Endothelial cell of umbilical vein (primary cell): ENCODE measurements at regions of chr6 and their contacts with region 1.

Region 1: DNA sequence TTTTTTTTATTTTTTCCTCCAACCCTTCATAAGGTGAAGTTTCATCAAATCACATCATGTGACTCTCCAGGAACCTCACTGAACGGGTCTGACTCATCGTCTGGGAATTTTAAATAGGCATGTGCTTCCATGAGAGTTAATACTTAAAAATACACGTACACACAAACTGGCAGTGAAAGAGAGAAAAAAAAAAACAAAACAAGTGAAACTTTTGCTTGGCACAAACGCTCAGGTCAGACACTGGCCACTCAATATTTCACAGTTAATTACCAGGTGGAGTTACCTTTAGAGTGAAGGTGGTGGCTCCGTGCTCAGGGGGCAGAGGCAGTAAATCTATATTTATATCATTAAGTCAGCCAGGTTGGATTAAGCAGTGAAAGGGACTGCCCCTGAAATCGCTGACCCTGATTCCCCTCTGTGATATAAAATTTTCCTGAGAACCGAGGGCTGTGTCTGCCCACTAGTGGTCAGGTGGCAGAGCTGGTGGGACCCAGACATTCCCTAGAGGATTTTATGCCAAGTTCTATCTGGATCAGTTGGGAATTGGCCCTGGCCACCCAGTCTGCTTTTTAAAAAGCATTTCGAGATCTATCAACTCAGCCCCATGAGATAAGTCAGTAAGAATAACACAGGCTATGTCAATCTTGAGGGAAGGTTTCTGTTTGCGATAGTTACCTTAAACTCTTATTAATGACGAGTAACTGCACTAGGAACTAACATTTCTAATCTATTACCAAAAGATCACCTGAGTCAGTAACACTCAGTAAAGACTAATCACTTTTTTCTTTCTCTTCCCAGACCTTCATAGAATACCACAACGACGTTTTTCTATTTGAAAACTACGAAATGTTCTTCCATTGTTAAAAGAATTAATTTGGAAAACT is 259.1 kb downstream of the HDGFL1 start:
- DNase-seq: peak; percentile 99
- H3K4me3 ChIP-seq: peak overlapping the region in 1 of 3 experiments; percentile 36
- H3K27ac ChIP-seq: peak overlapping the region; percentile 96
- H3K4me1 ChIP-seq: peaks cover 31% of the 10 kb centered on the region
- H3K27me3 ChIP-seq: no peaks in the 10 kb centered on the region
- CTCF ChIP-seq: peak; percentile 85 to 95
- POLR2A ChIP-seq: no peak

Region 2: GRCh38 chr6:21587179-21587924 is 1241.1 kb before region 1 on chr6:
- CTCF ChIA-PET with region 1: interaction called, 12 read pairs
- POLR2A ChIA-PET with region 1: interaction called, 11 read pairs
- dilution Hi-C with region 1: no loop called
- intact Hi-C with region 1: no loop called
- DNase-seq: peak; percentile 78
- H3K4me3 ChIP-seq: peak overlapping the region; percentile 33 to 65 (median 46)
- H3K27ac ChIP-seq: peak overlapping the region; percentile 71
- H3K4me1 ChIP-seq: peaks cover 17% of the 10 kb centered on the region
- H3K27me3 ChIP-seq: no peaks in the 10 kb centered on the region
- CTCF ChIP-seq: peak in 1 of 2 donors; percentile 50
- POLR2A ChIP-seq: no peak

Region 3: GRCh38 chr6:21846541-21847451 is 981.6 kb before region 1 on chr6:
- CTCF ChIA-PET with region 1: no interaction called
- POLR2A ChIA-PET with region 1: no interaction called
- dilution Hi-C with region 1: no loop called
- intact Hi-C with region 1: loop called (anchors 1 kb)
- DNase-seq: peak; percentile 96
- H3K4me3 ChIP-seq: peak overlapping the region in 1 of 3 experiments; percentile 27
- H3K27ac ChIP-seq: peak overlapping the region; percentile 98
- H3K4me1 ChIP-seq: peaks cover 54% of the 10 kb centered on the region
- H3K27me3 ChIP-seq: no peaks in the 10 kb centered on the region
- CTCF ChIP-seq: no peak
- POLR2A ChIP-seq: peak; percentile 30

Region 4: GRCh38 chr6:22145823-22146677 is 682.4 kb before region 1 on chr6:
- CTCF ChIA-PET with region 1: no interaction called
- POLR2A ChIA-PET with region 1: no interaction called
- dilution Hi-C with region 1: no loop called
- intact Hi-C with region 1: loop called (anchors 1 kb)
- DNase-seq: peak; percentile 69
- H3K4me3 ChIP-seq: no peak overlapping the region
- H3K27ac ChIP-seq: no peak overlapping the region
- H3K4me1 ChIP-seq: peaks cover 36% of the 10 kb centered on the region
- H3K27me3 ChIP-seq: no peaks in the 10 kb centered on the region
- CTCF ChIP-seq: no peak
- POLR2A ChIP-seq: no peak

Region 5: DNA sequence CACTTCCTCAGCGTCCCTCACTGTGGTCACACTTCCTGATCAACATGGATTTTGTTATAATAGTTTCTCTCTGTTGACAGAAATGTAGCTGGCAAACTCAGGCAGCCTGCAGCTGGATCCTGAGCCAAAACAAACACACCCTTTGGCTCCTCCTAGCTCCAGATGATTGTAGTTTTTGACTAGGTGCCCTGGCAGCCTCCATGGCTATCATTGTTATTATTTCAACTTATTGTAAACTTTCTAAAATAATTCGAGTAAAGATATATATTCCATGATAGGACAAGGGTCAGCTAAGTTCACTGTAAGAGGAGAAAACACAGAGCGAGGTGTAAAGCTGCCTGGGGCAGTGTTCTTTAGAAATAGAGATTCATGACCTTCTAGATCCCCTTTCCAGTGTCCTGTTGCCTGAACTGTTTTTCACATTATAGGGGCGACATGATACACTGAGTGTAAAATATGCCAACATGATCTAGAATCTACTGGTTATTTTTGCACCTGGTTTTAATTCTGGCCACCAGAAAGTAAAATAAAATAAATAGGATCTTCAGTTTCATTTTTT is 357.2 kb before region 1 on chr6:
- CTCF ChIA-PET with region 1: no interaction called
- POLR2A ChIA-PET with region 1: no interaction called
- dilution Hi-C with region 1: no loop called
- intact Hi-C with region 1: loop called (anchors 1 kb)
- DNase-seq: peak; percentile 98
- H3K4me3 ChIP-seq: no peak overlapping the region
- H3K27ac ChIP-seq: peak overlapping the region; percentile 56
- H3K4me1 ChIP-seq: peaks cover 27% of the 10 kb centered on the region
- H3K27me3 ChIP-seq: no peaks in the 10 kb centered on the region
- CTCF ChIP-seq: no peak
- POLR2A ChIP-seq: no peak

Region 6: GRCh38 chr6:22906091-22906555 is 77.7 kb after region 1 on chr6:
- CTCF ChIA-PET with region 1: interaction called, 10 read pairs
- POLR2A ChIA-PET with region 1: no interaction called
- dilution Hi-C with region 1: no loop called
- intact Hi-C with region 1: loop called (anchors 1 kb)
- DNase-seq: peak; percentile 56
- H3K4me3 ChIP-seq: no peak overlapping the region
- H3K27ac ChIP-seq: peak overlapping the region; percentile 3
- H3K4me1 ChIP-seq: no peaks in the 10 kb centered on the region
- H3K27me3 ChIP-seq: no peaks in the 10 kb centered on the region
- CTCF ChIP-seq: peak; percentile 34 to 35
- POLR2A ChIP-seq: no peak

Region 7: DNA sequence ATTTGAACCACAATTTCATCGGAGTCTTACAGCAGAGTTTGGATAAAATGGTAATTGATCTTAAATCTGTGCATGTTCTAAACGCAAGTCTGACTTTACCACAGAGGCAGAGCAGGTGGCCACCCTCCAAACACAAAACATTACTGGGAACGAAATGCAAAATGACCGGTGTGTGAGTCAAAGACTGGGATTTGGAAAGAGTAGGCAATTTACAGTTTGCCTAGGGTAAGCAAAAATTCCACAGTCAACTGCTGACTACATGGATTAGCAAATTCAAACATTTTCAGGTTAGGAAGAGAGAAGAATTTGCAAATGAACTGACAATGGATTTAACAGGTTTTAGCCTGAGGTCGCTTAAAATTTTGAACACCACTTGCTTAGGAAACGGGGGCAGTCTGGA is 185.4 kb after region 1 on chr6:
- CTCF ChIA-PET with region 1: no interaction called
- POLR2A ChIA-PET with region 1: no interaction called
- dilution Hi-C with region 1: no loop called
- intact Hi-C with region 1: no loop called
- DNase-seq: no peak
- H3K4me3 ChIP-seq: no peak overlapping the region
- H3K27ac ChIP-seq: no peak overlapping the region
- H3K4me1 ChIP-seq: no peaks in the 10 kb centered on the region
- H3K27me3 ChIP-seq: no peaks in the 10 kb centered on the region
- CTCF ChIP-seq: no peak
- POLR2A ChIP-seq: no peak